ENCODE measurements at regions of chr13 and their contacts with region 1.

Region 1: DNA sequence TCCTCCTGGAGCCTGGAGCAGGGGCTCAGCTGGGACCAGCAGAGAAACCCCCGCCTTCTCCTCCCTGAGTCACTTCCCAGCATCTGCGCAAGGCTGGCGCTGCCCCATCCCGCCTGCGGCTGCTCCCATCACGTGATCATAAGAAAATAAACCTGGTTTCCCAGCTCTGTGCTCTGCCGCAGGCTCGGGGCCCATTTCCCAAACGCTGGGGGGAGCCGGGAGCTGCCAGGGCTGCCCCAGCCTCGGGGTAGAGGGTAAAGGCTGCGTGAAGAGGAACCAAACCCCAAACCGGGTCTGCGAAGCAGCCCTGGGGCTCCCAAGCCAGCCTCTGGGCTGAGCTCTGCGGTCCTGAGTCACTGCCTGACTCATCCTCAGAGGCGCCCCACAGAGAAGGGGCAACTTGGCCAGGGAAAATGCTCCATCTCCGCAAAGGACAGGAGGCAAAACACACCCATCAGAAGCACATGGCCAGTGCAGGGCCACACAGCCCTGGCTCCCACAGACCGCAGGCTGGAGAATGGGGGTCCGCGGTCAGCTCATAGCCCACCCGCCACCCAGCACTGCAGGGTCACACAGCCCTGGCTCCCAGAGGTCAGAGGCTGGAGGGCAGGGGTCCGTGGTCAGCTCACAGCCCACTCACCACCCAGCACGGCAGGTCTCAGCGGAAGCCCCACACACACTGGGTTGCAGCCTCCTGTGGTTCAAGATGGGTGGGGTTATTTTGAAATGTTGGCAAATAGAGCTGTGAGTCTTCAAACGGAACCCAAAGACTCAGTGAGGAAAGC is 67.1 kb downstream of the RASA3 start:
- DNase-seq: peak; percentile 52
- H3K4me3 Mint-ChIP-seq: peak overlapping the region; percentile 70
- H3K27ac Mint-ChIP-seq: peak overlapping the region; percentile 89
- H3K4me1 Mint-ChIP-seq: peaks cover 43% of the 10 kb centered on the region
- H3K27me3 Mint-ChIP-seq: no peaks in the 10 kb centered on the region

Region 2: DNA sequence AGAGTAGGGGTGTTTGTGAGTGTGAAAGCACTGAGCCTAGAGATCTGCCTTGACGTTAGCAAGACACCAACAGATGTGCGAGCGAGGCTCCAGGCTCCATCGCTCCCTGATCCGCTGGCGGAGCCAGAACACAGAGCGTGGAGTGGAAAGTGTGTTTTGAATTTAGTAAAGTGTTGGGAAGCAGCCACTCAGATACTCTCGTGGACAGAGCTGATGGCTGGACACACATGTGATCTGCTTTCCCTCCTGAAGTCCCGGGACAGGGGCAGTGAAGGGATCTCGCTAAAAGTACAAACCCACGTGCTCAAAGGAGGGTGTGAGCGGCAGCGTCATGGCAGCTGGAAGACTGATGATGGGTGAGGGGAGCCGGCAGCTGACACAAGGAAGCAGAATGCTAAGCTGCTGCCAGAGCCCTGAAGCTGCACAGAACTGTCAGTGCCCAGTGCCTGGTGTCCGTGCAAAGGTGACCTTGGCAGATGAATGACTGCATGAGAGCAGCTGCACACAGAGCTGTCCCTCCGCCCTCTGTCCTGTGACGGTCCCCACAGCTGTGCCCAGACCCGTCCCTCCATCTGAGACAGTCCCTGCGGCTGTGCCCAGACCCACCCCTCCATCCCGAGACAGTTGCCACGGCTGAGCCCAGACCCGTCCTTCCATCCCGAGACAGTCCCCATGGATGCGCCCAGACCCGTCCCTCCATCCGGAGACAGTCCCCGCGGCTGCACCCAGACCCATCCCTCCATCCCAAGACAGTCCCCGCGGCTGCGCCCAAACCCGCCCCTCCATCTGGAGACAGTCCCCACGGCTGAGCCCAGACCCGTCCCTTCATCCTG is 335.9 kb before region 1 on chr13:
- intact Hi-C with region 1: no loop called
- DNase-seq: no peak
- H3K4me3 Mint-ChIP-seq: no peak overlapping the region
- H3K27ac Mint-ChIP-seq: no peak overlapping the region
- H3K4me1 Mint-ChIP-seq: peaks cover 3% of the 10 kb centered on the region
- H3K27me3 Mint-ChIP-seq: no peaks in the 10 kb centered on the region

Region 3: GRCh38 chr13:113930671-113931637 is 134.4 kb before region 1 on chr13:
- intact Hi-C with region 1: loop called (anchors 5 kb)
- DNase-seq: peak; percentile 18
- H3K4me3 Mint-ChIP-seq: no peak overlapping the region
- H3K27ac Mint-ChIP-seq: no peak overlapping the region
- H3K4me1 Mint-ChIP-seq: peaks cover 11% of the 10 kb centered on the region
- H3K27me3 Mint-ChIP-seq: peaks cover 24% of the 10 kb centered on the region

Region 4: DNA sequence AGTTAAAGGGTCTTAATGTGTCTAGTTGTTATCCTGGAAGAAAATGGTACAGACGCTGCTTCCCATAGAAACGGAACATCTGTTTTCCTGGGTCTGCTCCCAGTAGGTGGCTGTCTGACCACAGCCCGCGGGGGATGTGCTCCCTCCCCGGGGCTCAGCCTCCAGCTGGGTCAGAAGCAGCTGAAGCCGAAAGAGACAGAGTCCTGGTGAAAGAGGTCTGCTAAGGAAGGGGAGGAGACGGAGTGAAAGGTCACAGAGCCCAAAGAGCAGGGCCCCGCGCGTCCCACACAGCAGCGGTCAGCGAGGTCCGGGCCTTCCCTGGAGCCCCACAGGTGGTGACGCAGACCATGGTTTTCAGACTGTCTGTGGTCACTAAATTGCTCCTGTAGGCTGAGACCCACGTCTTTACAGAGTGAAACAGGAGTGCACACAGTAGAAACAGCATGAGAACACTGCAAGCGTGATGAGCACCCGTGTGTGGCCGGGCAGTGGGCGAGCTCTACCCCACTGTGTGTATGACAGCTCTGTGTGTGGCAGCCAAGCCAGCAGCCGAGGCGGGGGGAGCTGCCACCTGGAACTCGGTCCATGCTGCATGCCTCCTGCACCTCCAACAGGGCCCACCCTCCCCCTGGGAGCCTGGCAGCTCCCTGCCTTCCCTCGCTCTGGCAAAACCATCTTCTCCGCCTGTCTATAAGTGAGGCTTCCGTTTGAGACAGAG is 39.5 kb before region 1 on chr13:
- intact Hi-C with region 1: no loop called
- DNase-seq: no peak
- H3K4me3 Mint-ChIP-seq: no peak overlapping the region
- H3K27ac Mint-ChIP-seq: no peak overlapping the region
- H3K4me1 Mint-ChIP-seq: no peaks in the 10 kb centered on the region
- H3K27me3 Mint-ChIP-seq: no peaks in the 10 kb centered on the region

Region 5: DNA sequence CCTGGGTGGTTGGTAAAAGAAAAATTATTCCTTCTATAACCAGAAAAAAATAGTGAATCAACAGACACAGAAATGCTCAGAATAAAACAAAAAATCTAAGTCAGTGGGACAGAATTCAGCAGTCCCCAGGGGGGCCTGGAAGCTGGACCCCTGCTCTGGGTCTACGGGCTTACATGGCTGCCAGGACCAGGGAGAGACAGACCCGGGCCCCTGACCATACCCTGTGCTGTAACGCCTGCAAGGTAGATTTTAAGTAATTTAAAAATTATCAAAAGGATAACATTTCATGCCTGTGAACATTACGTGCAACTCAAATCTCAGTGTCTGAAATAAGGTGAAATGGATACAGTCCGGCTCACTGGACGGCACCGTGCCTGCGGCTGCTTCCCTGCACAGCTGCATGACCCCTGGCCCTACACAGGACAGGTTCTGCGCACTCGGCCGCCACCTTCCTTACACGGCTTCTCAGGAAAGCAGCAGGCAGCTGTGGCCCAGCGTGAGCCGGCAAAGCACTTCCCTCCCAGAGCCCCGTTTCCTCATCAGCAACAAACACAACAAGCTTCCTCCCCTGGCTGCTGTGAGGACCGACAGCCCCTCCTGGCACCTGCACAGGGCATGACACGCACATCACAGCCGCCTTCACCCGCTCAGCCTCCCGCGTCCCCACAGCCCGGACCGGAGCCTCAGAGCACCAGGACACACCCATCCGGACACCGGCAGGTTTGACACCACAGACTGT is 44.9 kb after region 1 on chr13:
- intact Hi-C with region 1: loop called (anchors 5 kb)
- DNase-seq: peak; percentile 70
- H3K4me3 Mint-ChIP-seq: peak overlapping the region; percentile 54
- H3K27ac Mint-ChIP-seq: peak overlapping the region; percentile 68
- H3K4me1 Mint-ChIP-seq: peaks cover 33% of the 10 kb centered on the region
- H3K27me3 Mint-ChIP-seq: no peaks in the 10 kb centered on the region

Region 6: GRCh38 chr13:114124921-114125320 is 59.6 kb after region 1 on chr13:
- intact Hi-C with region 1: loop called (anchors 1 kb)
- DNase-seq: peak; percentile 48
- H3K4me3 Mint-ChIP-seq: no peak overlapping the region
- H3K27ac Mint-ChIP-seq: peak overlapping the region; percentile 62
- H3K4me1 Mint-ChIP-seq: peaks cover 48% of the 10 kb centered on the region
- H3K27me3 Mint-ChIP-seq: peaks cover 3% of the 10 kb centered on the region

Region 7: GRCh38 chr13:114132419-114133121 is 67.2 kb after region 1 on chr13 and contains the start of gene RASA3:
- intact Hi-C with region 1: loop called (anchors 1 kb)
- DNase-seq: peak; percentile 55
- H3K4me3 Mint-ChIP-seq: peak within 1 kb of the TSS; percentile 93
- H3K27ac Mint-ChIP-seq: peak within 1 kb of the TSS; percentile 87
- H3K4me1 Mint-ChIP-seq: peaks cover 34% of the 10 kb centered on the region
- H3K27me3 Mint-ChIP-seq: peaks cover 13% of the 10 kb centered on the region
- total RNA-seq, gene RASA3: 13.7 and 13.9 TPM in 2 replicates

Region 8: DNA sequence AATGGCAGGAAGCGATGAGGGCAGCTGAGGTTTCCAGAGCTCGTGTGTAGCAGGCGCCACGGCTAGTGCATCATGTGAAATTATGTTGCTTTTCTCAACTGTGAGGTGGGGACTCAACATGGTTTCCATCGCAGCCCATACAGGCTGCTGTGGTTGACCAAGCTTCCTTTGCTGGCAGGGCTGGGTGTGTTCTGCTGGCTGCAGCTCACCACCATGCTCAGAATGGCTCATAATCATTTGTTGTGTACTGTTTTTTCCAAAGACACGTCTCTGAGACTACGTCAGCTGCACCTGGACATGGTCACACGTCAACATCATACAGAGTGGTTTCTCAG is 83.2 kb after region 1 on chr13:
- intact Hi-C with region 1: loop called (anchors 1 kb)
- DNase-seq: peak; percentile 86
- H3K4me3 Mint-ChIP-seq: peak overlapping the region; percentile 49
- H3K27ac Mint-ChIP-seq: peak overlapping the region; percentile 78
- H3K4me1 Mint-ChIP-seq: peaks cover 68% of the 10 kb centered on the region
- H3K27me3 Mint-ChIP-seq: peaks cover 7% of the 10 kb centered on the region

Region 9: GRCh38 chr13:114226699-114227323 is 161.5 kb after region 1 on chr13:
- intact Hi-C with region 1: loop called (anchors 2 kb)
- DNase-seq: peak; percentile 75
- H3K4me3 Mint-ChIP-seq: no peak overlapping the region
- H3K27ac Mint-ChIP-seq: no peak overlapping the region
- H3K4me1 Mint-ChIP-seq: peaks cover 14% of the 10 kb centered on the region
- H3K27me3 Mint-ChIP-seq: peaks cover 27% of the 10 kb centered on the region

Measured in activated T-helper 2 cell treated with anti-CD3 and anti-CD28 coated beads, Interferon-gamma antibody, Interleukin-2, Interleukin-4, amounts not matched to agents 10 μg/mL and 5 μg/mL and 100 μg/mL, durations not matched to agents 14 hours and 24 hours and 36 hours (primary cell).